Tibial artery (tissue), 4 donors: ENCODE measurements at regions of chr1 and their contacts with region 1.

Region 1: GRCh38 chr1:163422739-163423404 is 101.1 kb downstream of the NUF2 start:
- DNase-seq: no peak
- H3K4me3 ChIP-seq: no peak overlapping the region
- H3K27ac ChIP-seq: no peak overlapping the region
- H3K4me1 ChIP-seq: no peaks in the 10 kb centered on the region
- H3K27me3 ChIP-seq: no peaks in the 10 kb centered on the region
- CTCF ChIP-seq: no peak

Region 2: DNA sequence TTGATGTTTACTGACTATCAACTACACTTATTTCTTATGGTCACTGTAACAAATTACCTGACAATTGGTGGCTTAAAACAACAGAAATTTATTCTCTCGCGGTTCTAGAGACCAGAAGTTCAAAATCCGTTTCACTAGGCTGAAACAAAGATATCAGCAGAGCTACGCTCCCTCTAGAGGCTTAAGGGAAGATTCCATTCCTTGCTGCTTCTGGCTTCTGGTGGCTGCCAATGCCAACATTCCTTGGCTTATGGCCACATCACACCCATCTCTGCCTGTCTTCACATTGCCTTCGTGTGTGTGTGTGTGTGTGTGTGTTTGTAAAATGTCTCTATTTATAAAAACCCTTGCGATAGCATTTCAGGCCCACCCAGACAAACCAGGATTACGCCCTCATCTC is 1867.3 kb after region 1 on chr1:
- intact Hi-C with region 1: loop called (anchors 5 kb)
- DNase-seq: no peak
- H3K4me3 ChIP-seq: no peak overlapping the region
- H3K27ac ChIP-seq: no peak overlapping the region
- H3K4me1 ChIP-seq: no peaks in the 10 kb centered on the region
- H3K27me3 ChIP-seq: peaks cover 0 to 30% of the 10 kb centered on the region in 2 donors
- CTCF ChIP-seq: no peak